ENCODE measurements at regions of chr1 and their contacts with region 1.

Region 1: GRCh38 chr1:15741183-15741850 is 982 bp upstream of the TMEM82 start:
- DNase-seq: peak; percentile 64 to 78
- ATAC-seq: peak; percentile 62 to 82 (median 76)
- H3K4me3 ChIP-seq: no peak overlapping the region
- H3K27ac ChIP-seq: no peak overlapping the region
- H3K4me1 ChIP-seq: peaks cover 4 to 28% (median 11%) of the 10 kb centered on the region in 9 donors
- H3K27me3 ChIP-seq: no peaks in the 10 kb centered on the region
- CTCF ChIP-seq: peak; percentile 57 to 86 (median 78)

Region 2: GRCh38 chr1:15595809-15596617 is 145.3 kb before region 1 on chr1:
- intact Hi-C with region 1: loop called in 8 of 10 experiments (anchors 2 to 10 kb)
- DNase-seq: no peak
- ATAC-seq: no peak
- H3K4me3 ChIP-seq: no peak overlapping the region
- H3K27ac ChIP-seq: peak overlapping the region in 2 of 10 donors; percentile 3 to 45
- H3K4me1 ChIP-seq: peaks cover 0 to 27% (median 12%) of the 10 kb centered on the region in 9 donors
- H3K27me3 ChIP-seq: no peaks in the 10 kb centered on the region
- CTCF ChIP-seq: no peak

Region 3: GRCh38 chr1:15603050-15603965 is 138.0 kb before region 1 on chr1:
- intact Hi-C with region 1: loop called in 7 of 10 experiments (anchors 5 to 10 kb)
- DNase-seq: peak; percentile 96 to 97
- ATAC-seq: peak; percentile 96 to 99 (median 99)
- H3K4me3 ChIP-seq: peak overlapping the region; percentile 68 to 95 (median 75)
- H3K27ac ChIP-seq: peak overlapping the region in 9 of 10 donors; percentile 73 to 89 (median 79)
- H3K4me1 ChIP-seq: peaks cover 2 to 27% (median 18%) of the 10 kb centered on the region in 9 donors
- H3K27me3 ChIP-seq: no peaks in the 10 kb centered on the region
- CTCF ChIP-seq: no peak

Region 4: GRCh38 chr1:15662477-15662876 is 78.8 kb before region 1 on chr1:
- intact Hi-C with region 1: loop called in 1 of 10 experiments (anchors 5 kb)
- DNase-seq: no peak
- ATAC-seq: peak in 5 of 8 donors; percentile 61 to 92 (median 77)
- H3K4me3 ChIP-seq: no peak overlapping the region
- H3K27ac ChIP-seq: peak overlapping the region in 3 of 10 donors; percentile 10 to 42 (median 17)
- H3K4me1 ChIP-seq: peaks cover 0 to 15% (median under 1%) of the 10 kb centered on the region in 9 donors
- H3K27me3 ChIP-seq: no peaks in the 10 kb centered on the region
- CTCF ChIP-seq: no peak

Region 5: GRCh38 chr1:15825800-15826199 is 84.5 kb after region 1 on chr1:
- intact Hi-C with region 1: no loop called
- DNase-seq: no peak
- ATAC-seq: peak in 4 of 8 donors; percentile 31 to 55 (median 43)
- H3K4me3 ChIP-seq: no peak overlapping the region
- H3K27ac ChIP-seq: peak overlapping the region in 2 of 10 donors; percentile 7 to 41
- H3K4me1 ChIP-seq: peaks cover 0 to 34% (median 6%) of the 10 kb centered on the region in 9 donors
- H3K27me3 ChIP-seq: no peaks in the 10 kb centered on the region
- CTCF ChIP-seq: no peak

Measured in heart right ventricle (tissue), 16 donors.